ENCODE measurements at regions of chr11 and their contacts with region 1.

Region 1: DNA sequence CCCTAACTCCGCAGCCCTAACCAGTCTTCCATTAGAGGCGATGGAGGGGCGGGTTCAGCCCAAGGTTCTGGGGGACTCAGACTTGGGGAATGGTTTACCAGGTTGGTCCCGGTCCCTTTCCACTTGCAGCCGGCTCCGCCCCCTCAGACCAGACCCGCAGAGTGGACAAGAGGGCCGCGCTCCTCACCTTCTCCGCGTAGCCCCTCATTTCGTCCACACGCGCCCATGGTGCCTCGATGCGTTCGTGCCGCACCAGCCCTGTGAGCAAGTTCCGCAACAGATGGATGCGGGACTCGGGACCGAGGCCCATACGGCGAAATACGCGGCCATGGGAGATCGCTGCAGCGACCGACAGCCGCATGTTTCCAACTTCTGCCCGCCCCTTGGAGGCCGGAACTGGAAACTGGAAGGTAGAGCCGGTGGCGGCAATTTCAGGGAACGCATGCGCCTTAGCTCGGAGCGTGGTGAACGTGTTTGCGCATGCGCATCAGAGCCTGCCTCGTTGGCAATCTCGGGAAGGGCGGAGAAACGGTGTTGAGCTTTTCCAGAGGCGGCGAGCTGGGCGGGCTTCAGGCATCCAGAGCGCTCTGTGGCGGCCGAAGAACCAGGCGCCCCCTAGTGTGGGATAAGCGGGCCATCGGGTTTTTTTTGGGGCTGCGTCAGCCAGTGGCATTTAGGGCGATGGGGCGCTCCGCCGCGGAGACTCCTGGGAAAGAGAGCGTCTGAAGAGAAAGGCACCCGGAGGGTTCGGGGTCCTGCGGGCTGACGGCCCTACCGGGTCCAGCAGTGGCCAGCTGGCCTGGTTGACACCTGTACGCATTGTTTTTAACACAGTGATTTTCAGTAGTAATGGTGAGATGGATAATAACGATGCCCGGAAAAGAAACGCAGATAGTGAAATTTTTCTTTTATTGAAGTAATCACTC is at the start of gene MRPL17:
- DNase-seq: peak; percentile 97
- H3K4me3 ChIP-seq: peak within 1 kb of the TSS; percentile 84
- H3K27me3 ChIP-seq: no peaks in the 10 kb centered on the region
- CTCF ChIP-seq: peak; percentile 92
- polyA plus RNA-seq, gene MRPL17: 68.9 and 82.3 TPM in 2 replicates

Region 2: DNA sequence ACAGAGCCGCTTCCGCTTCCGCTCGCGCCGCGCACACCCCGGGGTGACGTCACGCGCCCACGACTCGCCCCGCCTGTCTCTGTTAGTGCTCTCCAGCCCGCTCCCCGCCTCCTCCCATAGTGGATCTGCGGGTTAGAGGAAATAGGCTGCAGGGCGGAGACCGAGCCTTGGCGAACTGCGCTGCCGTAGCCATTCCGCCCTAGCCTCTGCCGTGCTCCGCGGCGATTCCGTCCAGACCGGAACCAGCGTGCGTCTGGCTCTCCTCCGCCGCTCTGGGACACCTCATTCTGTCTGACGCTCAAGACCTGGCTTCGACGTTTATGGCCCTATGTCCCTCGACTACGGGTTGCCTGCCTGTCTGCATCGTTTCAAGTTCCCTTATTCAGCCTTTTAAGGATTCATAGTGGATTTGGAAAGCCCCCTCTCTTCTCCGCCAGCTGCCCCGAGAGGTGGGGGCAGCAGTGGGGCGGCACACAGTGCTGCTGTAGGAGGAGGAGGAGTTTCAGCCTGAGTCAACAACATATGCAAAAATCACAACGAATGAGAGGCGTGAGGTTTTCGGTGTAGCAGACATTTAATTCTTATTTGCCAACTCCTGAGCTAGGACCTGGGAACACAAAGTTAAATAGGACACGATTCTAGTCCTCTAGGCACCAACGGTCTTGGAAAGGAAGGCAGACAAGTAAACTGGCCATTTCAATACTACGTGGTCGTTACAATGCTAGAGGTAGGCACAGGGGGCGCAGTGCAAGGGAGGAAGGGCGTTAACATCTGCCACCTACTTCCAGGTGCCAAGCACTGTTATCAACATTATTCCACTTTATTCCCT is 70.8 kb before region 1 on chr11 and contains the start of gene TAF10:
- CTCF ChIA-PET with region 1: interaction called, 24 read pairs
- POLR2A ChIA-PET with region 1: no interaction called
- DNase-seq: peak; percentile 80
- H3K4me3 ChIP-seq: peak within 1 kb of the TSS; percentile 79
- H3K27me3 ChIP-seq: no peaks in the 10 kb centered on the region
- CTCF ChIP-seq: peak; percentile 59
- polyA plus RNA-seq, gene TAF10: 158 and 205 TPM in 2 replicates

Region 3: DNA sequence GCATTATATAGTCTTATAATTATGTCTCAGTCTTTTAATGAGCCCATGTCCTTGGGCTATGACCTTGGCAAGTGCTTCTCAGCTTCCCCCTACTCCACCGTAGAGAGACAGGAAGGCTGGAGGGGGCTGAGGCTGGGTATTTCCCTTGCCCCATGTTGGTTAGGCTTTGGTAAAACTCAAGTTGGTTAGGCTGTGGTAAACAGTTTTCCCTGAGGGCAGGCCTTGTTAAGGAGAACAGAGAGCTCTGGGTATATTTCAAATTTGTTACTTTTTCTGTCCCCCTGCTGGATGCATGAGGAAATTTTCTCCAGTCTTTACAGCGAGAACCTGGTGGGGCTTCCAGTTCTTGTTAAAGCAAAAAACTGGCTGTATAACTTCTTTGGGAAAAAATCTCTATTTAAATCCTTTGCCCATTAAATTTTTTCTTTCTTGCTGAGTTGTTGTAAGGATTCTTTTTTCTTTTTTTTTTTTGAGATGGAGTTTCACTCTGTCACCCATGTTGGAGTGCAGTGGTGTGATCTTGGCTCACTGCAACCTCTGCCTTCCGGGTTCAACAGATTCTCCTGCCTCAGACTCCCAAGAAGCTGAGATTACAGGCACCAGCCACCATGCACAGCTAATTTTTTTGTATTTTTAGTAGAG is 15.3 kb before region 1 on chr11:
- CTCF ChIA-PET with region 1: interaction called, 18 read pairs
- POLR2A ChIA-PET with region 1: no interaction called
- DNase-seq: no peak
- H3K4me3 ChIP-seq: no peak overlapping the region
- H3K27me3 ChIP-seq: no peaks in the 10 kb centered on the region
- CTCF ChIP-seq: peak; percentile 57